ENCODE measurements at regions of chr20 and their contacts with region 1.

Region 1: GRCh38 chr20:63641792-63642544 is 11.3 kb downstream of the STMN3 start:
- DNase-seq: peak; percentile 93
- H3K4me3 Mint-ChIP-seq: peak overlapping the region; percentile 57
- H3K27ac Mint-ChIP-seq: peak overlapping the region; percentile 70
- H3K4me1 Mint-ChIP-seq: peaks cover 21% of the 10 kb centered on the region
- H3K27me3 Mint-ChIP-seq: peaks cover 7% of the 10 kb centered on the region

Region 2: GRCh38 chr20:62642040-62642665 is 999.8 kb before region 1 on chr20 and contains the start of gene SLCO4A1:
- intact Hi-C with region 1: no loop called
- DNase-seq: peak; percentile 90
- H3K4me3 Mint-ChIP-seq: peak within 1 kb of the TSS; percentile 85
- H3K27ac Mint-ChIP-seq: peak within 1 kb of the TSS; percentile 78
- H3K4me1 Mint-ChIP-seq: peaks cover 16% of the 10 kb centered on the region
- H3K27me3 Mint-ChIP-seq: peaks cover 16% of the 10 kb centered on the region
- total RNA-seq, gene SLCO4A1: 47.6 and 49.8 TPM in 2 replicates

Region 3: DNA sequence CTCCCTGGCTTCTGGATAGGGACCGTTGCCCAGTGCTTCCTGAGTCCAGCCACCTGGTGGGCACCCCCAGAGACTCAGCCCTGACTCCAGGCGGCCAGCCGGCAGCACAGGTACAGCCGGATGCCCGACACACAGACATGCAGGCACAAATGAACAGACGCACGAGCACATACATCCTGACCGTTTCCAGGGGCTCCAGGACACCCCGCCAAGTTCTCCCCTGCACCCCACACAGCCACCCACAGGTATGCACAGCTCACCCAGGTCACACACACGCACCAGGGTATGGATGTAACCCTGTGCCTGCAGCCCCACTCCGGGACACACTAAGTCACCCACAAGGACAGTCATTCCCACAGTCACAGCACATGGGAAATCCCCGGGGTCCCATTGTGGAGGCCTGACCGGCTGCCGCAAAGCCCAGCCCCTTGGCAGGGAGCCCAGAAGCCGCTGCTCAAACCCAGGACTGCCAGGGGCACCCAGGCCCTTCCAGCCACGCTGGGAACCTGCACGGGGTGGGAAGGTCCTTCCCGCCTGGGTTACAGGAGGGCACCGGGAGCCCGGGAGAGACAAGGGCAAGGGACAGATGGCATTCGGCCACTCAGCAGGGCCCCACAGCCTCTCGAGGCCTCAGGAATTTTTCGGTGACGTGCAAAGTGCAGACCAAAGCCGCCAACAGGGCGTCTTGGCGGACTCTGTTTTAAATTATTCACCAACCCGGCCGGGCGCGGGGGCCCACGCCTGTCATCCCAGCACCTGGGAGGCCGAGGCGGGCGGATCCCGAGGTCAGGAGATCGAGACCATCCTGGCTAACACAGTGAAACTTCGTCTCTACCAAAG is 158.9 kb before region 1 on chr20:
- intact Hi-C with region 1: no loop called
- DNase-seq: no peak
- H3K4me3 Mint-ChIP-seq: no peak overlapping the region
- H3K27ac Mint-ChIP-seq: no peak overlapping the region
- H3K4me1 Mint-ChIP-seq: no peaks in the 10 kb centered on the region
- H3K27me3 Mint-ChIP-seq: peaks cover 13% of the 10 kb centered on the region

Region 4: GRCh38 chr20:64069614-64070243 is 427.8 kb after region 1 on chr20:
- intact Hi-C with region 1: loop called (anchors 5 kb)
- DNase-seq: no peak
- H3K4me3 Mint-ChIP-seq: peak overlapping the region; percentile 15
- H3K27ac Mint-ChIP-seq: no peak overlapping the region
- H3K4me1 Mint-ChIP-seq: peaks cover 34% of the 10 kb centered on the region
- H3K27me3 Mint-ChIP-seq: no peaks in the 10 kb centered on the region